ENCODE measurements at regions of chr7 and their contacts with region 1.

Region 1: GRCh38 chr7:149662591-149663095 is 110.7 kb downstream of the ZNF467 start:
- DNase-seq: peak; percentile 74 to 86 (median 82)
- ATAC-seq: peak; percentile 72
- H3K4me3 ChIP-seq: no peak overlapping the region
- H3K27ac ChIP-seq: no peak overlapping the region
- H3K4me1 ChIP-seq: no peaks in the 10 kb centered on the region
- H3K27me3 ChIP-seq: no peaks in the 10 kb centered on the region
- CTCF ChIP-seq: peak in 6 of 7 experiments; percentile 53 to 68 (median 62)
- POLR2A ChIP-seq: no peak

Region 2: GRCh38 chr7:149742075-149742701 is 79.5 kb after region 1 on chr7:
- intact Hi-C with region 1: loop called (anchors 10 kb)
- DNase-seq: peak; percentile 68 to 81 (median 70)
- ATAC-seq: peak; percentile 86
- H3K4me3 ChIP-seq: peak overlapping the region in 1 of 2 donors; percentile 24
- H3K27ac ChIP-seq: peak overlapping the region; percentile 28 to 54 (median 47)
- H3K4me1 ChIP-seq: peaks cover 12% of the 10 kb centered on the region
- H3K27me3 ChIP-seq: no peaks in the 10 kb centered on the region
- CTCF ChIP-seq: peak; percentile 64 to 93 (median 84)
- POLR2A ChIP-seq: no peak

Region 3: GRCh38 chr7:149771721-149772240 is 109.1 kb after region 1 on chr7:
- intact Hi-C with region 1: no loop called
- DNase-seq: peak; percentile 94 to 95 (median 94)
- ATAC-seq: peak; percentile 89
- H3K4me3 ChIP-seq: peak overlapping the region; percentile 57 to 65
- H3K27ac ChIP-seq: peak overlapping the region; percentile 73 to 86 (median 77)
- H3K4me1 ChIP-seq: peaks cover 21% of the 10 kb centered on the region
- H3K27me3 ChIP-seq: no peaks in the 10 kb centered on the region
- CTCF ChIP-seq: no peak
- POLR2A ChIP-seq: peak in 2 of 3 donors; percentile 53 to 68

Region 4: GRCh38 chr7:149790146-149790548 is 127.5 kb after region 1 on chr7:
- intact Hi-C with region 1: no loop called
- DNase-seq: peak; percentile 29 to 57 (median 42)
- ATAC-seq: no peak
- H3K4me3 ChIP-seq: no peak overlapping the region
- H3K27ac ChIP-seq: no peak overlapping the region
- H3K4me1 ChIP-seq: peaks cover 9% of the 10 kb centered on the region
- H3K27me3 ChIP-seq: no peaks in the 10 kb centered on the region
- CTCF ChIP-seq: peak; percentile 21 to 55 (median 40)
- POLR2A ChIP-seq: no peak

Measured in body of pancreas (tissue), 4 donors.